ENCODE measurements at regions of chr3 and their contacts with region 1.

Region 1: DNA sequence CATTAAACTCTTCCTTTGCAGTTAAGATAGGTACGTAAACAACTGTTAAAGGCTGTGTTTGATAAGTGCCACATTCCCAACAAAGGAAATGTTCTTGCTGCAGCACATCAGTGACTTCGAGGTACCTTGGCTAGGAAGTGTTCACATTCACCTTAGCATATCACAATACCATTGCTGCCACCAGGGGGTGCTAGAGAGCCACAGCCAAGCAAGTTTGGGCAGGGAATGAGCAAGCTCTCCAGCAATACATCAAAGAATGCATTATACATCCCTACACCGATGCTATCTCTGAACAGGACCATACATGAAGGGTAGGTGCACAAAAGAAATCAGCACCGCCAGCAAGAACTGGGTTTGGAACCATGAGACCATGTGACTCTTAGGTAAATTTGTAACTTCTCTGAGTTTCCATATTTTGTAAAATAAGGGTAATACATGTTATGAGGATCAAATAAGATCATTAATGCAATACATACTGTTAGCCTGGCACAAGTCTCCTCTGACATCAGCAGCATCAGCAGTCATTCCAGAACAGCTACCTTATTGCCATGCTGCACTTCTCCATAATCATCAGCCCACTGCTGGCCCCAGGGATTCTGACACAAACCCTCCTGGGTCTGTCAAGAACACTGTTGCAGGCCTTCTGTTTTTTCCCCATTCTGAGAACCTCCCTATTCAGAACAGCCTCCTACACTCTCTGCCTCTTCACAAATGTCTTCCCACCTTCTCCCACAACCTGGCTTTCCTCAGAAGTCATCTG is 37.6 kb downstream of the RYK start:
- DNase-seq: peak; percentile 72 to 93 (median 85)
- H3K4me3 ChIP-seq: no peak overlapping the region
- H3K27ac ChIP-seq: no peak overlapping the region
- H3K4me1 ChIP-seq: peaks cover 0 to 11% of the 10 kb centered on the region in 2 donors
- H3K27me3 ChIP-seq: no peaks in the 10 kb centered on the region
- CTCF ChIP-seq: peak; percentile 92 to 99 (median 94)
- POLR2A ChIP-seq: no peak

Region 2: GRCh38 chr3:134299185-134299887 is 86.2 kb after region 1 on chr3:
- intact Hi-C with region 1: loop called (anchors 2 to 5 kb)
- DNase-seq: peak in 1 of 7 donors; percentile 40
- H3K4me3 ChIP-seq: no peak overlapping the region
- H3K27ac ChIP-seq: no peak overlapping the region
- H3K4me1 ChIP-seq: no peaks in the 10 kb centered on the region
- H3K27me3 ChIP-seq: no peaks in the 10 kb centered on the region
- CTCF ChIP-seq: peak; percentile 16 to 69 (median 63)
- POLR2A ChIP-seq: no peak